Spleen (tissue), 13 donors: ENCODE measurements at regions of chr14 and their contacts with region 1.

Region 1: DNA sequence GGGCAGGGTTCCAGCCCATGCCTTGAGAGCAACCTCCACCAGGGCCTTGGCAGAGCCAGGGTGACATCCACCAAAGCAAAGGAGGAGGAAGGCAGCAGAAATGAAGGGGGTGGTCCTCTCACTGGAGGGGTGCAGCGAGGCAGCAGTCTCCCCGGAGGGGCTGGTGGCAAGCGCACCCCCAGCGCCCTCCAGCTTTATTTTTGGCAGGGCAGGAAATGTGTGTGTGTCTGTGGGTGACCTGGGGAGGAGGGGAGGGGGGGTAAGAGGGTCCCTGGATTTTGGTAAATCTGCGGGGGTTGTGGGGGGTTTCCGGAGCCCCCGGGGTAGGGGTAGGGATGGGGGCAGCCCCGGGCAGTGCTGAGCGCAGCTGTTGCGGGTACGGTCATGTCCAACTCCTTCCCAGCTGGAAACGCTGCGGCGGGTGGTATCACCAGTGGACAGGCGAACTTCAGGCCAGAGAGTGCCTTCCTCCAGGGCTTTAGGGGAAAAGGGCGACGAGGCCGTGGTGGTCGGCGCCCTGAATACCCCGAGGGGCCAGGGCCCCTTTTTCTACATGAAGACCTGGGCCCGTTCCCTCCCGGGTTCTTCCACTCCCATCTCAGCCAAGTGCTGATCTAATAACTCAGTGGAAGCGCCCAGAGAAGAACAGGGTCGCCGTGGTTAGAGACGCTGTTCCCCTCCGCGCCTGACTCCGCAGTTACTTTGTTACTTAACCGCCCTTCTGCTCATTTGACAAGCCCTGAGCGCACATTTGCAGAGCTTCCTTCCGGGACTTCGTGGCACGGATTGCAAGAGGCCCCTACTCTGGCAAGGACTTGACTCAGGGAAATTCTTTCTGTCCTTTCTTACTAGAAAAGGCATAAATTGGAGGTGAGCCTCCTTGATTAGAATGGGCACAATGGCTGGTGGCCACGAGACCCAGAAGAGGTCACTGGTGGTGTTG is 55.2 kb downstream of the FOS start:
- DNase-seq: peak; percentile 90
- H3K4me3 ChIP-seq: peak overlapping the region in 7 of 8 donors; percentile 4 to 65 (median 28)
- H3K27ac ChIP-seq: peak overlapping the region; percentile 80 to 97 (median 92)
- H3K4me1 ChIP-seq: peaks cover 15 to 63% (median 32%) of the 10 kb centered on the region in 6 donors
- H3K27me3 ChIP-seq: no peaks in the 10 kb centered on the region
- CTCF ChIP-seq: no peak
- POLR2A ChIP-seq: peak in 1 of 3 donors; percentile 40

Region 2: DNA sequence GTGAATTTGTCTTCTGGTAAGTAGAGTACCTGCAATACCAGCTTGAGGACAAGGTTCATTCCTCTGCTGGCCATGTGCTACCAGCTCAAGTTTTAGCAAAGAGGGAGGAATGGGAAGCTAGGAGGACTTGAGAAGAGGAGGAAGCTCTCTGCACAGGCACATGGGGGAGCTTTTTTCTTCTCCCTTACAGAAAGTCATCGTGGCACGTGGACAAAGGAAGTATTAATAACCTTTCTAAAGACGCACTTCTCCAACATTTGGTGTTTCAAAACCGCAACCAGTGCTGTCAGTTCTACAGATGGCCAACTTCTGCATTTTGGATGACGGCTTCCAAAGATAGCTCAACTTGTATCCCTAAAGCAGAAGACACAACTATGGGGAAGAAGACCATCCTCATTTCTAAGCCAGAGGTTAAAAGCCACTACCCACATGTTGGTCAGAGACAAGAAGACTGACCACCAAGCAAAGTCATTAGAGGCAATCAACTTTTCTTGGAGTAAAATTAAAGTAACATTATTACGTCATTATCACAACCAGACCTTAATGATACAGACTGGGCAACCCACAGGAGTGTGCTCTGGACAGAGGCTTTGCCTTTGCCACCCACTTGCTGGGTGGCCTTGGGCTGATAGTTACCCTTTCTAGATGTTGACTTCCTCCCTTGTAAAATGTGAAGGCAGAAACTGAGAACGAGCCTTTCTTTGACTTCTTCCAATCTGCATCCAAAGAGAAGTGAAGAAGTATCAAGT is 145.2 kb before region 1 on chr14:
- intact Hi-C with region 1: no loop called
- DNase-seq: no peak
- H3K4me3 ChIP-seq: peak overlapping the region in 1 of 8 donors; percentile 19
- H3K27ac ChIP-seq: peak overlapping the region in 7 of 8 donors; percentile 37 to 83 (median 63)
- H3K4me1 ChIP-seq: peaks cover 0 to 39% (median 18%) of the 10 kb centered on the region in 6 donors
- H3K27me3 ChIP-seq: no peaks in the 10 kb centered on the region
- CTCF ChIP-seq: peak in 2 of 11 experiments; percentile 16 to 17
- POLR2A ChIP-seq: no peak

Region 3: DNA sequence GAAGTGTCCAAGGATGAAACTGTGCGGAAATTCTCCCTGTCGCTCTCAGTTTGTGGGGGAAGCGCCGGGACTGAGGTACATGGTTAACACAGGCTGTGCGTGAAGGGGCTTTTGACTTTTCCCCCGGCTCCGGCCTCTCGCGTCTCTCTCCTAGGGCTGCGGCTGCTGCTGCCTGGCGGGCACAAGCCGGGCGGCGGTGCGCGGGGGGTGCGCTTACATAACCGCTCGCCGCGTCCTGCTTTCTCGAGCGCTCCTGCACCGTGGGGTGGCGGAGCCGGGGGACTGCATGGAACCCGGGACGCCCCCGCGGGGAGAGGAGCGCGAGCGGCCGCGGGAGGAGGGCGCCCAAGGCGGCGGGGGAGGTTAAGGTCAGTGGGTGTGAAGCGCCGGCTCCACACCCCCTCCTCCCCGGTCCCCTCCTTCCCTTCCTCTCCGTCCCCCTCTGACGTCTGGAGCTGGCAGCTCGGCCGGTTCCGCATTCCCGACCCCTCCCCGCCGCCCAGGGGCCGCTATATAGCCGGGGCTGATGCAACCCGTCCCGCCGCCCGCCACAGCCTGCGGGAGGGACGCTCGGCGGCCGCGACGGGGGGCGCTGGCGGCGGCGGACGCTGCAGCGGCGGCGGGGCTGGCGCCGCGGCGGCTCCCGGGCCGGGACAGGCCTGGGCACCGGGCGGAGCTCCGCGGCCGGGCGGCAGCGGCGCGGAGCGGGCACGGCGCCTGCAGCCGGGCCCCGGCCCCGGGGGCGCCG is 93.8 kb after region 1 on chr14 and contains the start of gene JDP2:
- intact Hi-C with region 1: loop called (anchors 10 kb)
- DNase-seq: peak; percentile 96
- H3K4me3 ChIP-seq: peak within 1 kb of the TSS; percentile 45 to 87 (median 63)
- H3K27ac ChIP-seq: peak within 1 kb of the TSS; percentile 84 to 94 (median 91)
- H3K4me1 ChIP-seq: peaks cover 14 to 63% (median 48%) of the 10 kb centered on the region in 6 donors
- H3K27me3 ChIP-seq: peaks cover 0 to 14% (median 0%) of the 10 kb centered on the region in 7 donors
- CTCF ChIP-seq: peak in 8 of 11 experiments; percentile 15 to 46 (median 29)
- POLR2A ChIP-seq: peak in 2 of 3 donors; percentile 62 to 67
- total RNA-seq, gene JDP2: 52.6 to 144 (median 123) TPM

Region 4: DNA sequence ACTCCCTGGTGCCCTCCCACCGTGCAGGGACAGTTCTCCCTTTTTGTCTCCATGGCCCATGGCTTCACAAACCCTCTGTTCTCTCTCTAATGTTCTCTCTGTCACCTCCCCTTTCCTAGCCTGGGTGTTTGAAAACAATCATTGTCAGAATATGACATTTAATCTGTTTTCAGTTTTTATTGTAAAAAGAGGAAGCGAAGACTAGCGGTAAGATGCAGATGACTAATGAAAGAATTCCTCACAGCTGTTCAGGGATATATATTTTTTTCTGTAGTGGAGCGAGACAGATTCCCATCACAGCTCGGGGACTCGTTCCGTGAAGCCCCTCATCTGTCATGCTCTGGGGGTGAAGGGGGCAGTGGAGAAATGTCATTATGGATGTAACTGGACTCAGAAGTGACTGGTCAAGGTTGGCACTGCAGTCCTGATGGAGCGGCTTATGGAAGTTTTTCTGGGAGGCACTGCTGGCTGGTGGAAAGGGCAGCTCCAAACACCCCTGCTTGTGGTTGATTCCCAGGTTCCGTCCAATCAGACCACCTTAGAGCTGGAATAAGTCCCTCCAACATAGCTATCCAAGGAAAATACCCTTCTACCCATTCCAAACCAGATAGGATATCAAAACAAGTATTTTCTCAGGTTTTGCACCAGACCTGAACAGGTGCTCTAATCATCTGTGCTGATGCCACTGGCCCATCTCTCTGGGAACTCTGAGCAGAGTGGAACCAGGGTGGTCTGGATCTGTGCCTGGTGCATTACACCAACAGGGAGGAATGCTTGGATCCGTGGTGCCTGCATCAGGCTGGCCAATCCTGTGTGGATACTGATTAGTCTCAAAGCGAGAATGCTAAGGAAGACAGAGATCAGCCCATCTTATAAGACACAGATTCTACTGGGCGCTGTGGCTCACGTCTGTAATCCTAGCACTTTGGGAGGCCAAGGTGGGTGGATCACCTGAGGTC is 902.6 kb after region 1 on chr14:
- intact Hi-C with region 1: no loop called
- DNase-seq: no peak
- H3K4me3 ChIP-seq: no peak overlapping the region
- H3K27ac ChIP-seq: no peak overlapping the region
- H3K4me1 ChIP-seq: no peaks in the 10 kb centered on the region
- H3K27me3 ChIP-seq: no peaks in the 10 kb centered on the region
- CTCF ChIP-seq: no peak
- POLR2A ChIP-seq: no peak